ENCODE measurements at regions of chr12 and their contacts with region 1.

Region 1: DNA sequence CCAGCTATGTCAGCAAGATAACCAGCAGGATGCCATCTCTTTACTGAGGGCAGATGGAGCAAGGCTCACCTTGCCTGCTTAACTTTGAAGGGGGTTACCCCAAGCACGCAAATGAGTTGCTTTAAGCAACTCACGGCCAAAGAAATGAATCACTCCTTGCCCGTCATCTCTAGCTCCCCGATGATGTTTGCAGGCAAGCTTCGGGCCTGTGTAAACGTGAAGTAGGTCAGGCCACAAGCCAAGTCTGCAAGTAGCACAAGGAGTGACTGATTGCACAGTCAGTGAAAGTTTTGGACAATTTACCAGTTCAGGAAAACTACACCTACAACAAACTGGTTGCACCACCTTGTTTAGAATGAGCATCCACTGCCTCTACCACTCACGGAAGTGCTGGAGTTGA is 699.7 kb upstream of the TBX3 start:
- DNase-seq: peak; percentile 100
- H3K4me3 ChIP-seq: no peak overlapping the region
- H3K27ac ChIP-seq: peak overlapping the region; percentile 77
- H3K4me1 ChIP-seq: peaks cover 14% of the 10 kb centered on the region
- H3K27me3 ChIP-seq: no peaks in the 10 kb centered on the region
- CTCF ChIP-seq: no peak

Region 2: DNA sequence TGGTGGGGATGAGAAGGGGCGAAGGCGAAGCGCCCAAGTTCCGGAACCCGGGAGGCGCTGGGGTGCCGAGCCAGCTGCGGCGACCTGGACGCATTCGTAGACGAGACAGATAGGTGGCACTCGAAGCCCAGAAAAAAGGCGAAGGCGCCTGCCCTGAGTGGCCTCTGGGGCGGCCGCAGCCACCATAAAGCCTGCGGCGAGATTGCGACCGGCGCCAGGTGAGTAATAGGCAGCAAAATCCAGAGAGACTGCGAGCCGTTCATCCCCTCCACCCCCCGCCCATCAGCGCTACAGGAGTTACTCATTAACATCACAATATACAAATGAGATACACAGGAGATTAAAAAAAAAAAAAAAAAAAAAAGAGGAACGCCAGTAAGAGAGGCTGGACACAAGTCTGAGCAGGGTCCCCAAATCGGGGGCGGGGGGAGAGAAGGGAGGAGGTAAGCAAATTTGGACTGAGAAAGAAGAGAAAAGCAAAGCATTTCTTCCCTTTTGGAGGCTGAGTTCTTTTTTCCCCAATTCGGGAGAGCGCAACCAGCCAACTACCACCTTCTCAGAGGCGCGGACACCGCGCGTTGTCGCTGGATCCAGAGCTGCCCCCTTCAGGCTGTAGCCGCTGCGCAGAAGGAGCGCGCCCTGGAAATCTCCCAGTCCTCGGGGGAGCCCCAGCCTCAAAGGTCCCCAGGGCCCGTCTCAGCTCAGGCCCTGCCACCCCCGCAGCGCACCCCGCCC is 715.4 kb before region 1 on chr12:
- CTCF ChIA-PET with region 1: no interaction called
- dilution Hi-C with region 1: no loop called
- in situ Hi-C with region 1: no loop called
- intact Hi-C with region 1: loop called (anchors 1 kb)
- DNase-seq: peak; percentile 91
- H3K4me3 ChIP-seq: peak overlapping the region; percentile 43 to 60 (median 48)
- H3K27ac ChIP-seq: peak overlapping the region; percentile 75
- H3K4me1 ChIP-seq: peaks cover 41% of the 10 kb centered on the region
- H3K27me3 ChIP-seq: no peaks in the 10 kb centered on the region
- CTCF ChIP-seq: peak; percentile 35 to 69

Region 3: DNA sequence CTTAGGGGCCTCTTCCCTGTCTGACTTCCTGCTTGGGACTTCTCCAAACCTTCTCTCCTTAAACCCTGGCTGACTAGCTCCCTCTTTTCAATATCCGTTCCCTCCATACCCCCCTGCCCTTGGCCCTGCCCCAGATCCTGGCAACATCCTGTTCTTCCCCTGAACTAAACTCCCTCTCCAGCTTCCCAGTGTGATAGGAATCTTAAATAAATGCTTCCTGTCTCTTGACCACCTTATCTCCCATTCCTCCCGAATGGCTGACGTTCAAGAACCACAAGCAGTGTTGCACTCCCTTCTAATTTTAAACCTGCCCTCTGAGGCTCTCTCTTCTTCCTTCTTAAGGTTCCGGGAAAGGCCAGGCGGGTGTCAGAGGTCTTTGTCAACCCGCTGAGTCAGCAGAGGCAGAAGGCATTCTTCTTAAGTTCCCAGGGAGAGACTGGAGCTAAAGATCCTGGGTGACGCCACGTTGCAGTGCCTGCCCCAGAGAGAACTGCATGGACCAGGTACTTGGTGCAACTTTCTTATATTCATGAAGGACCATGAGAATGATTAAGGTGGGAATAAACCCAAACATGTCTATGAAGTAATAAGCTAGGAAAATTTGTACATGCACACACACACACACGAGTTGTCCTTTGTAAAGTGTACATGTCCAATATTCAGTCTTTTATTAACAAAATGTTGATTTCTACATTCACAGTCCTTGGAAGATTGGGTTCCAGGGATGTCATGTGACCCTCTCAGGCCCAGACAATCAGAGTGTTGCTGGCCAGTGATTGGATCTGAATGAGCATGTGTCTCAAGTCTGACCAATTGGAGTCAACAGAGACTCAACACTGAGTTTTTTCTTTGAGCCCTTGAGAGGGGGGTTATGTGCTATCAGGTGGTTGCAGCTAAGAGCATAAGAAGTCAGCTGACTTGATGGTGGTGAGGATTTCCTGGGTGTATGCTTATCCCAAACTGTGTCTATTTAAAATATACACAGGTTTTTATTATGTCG is 279.5 kb before region 1 on chr12:
- CTCF ChIA-PET with region 1: no interaction called
- dilution Hi-C with region 1: no loop called
- in situ Hi-C with region 1: no loop called
- intact Hi-C with region 1: no loop called
- DNase-seq: no peak
- H3K4me3 ChIP-seq: no peak overlapping the region
- H3K27ac ChIP-seq: no peak overlapping the region
- H3K4me1 ChIP-seq: no peaks in the 10 kb centered on the region
- H3K27me3 ChIP-seq: no peaks in the 10 kb centered on the region
- CTCF ChIP-seq: no peak

Region 4: DNA sequence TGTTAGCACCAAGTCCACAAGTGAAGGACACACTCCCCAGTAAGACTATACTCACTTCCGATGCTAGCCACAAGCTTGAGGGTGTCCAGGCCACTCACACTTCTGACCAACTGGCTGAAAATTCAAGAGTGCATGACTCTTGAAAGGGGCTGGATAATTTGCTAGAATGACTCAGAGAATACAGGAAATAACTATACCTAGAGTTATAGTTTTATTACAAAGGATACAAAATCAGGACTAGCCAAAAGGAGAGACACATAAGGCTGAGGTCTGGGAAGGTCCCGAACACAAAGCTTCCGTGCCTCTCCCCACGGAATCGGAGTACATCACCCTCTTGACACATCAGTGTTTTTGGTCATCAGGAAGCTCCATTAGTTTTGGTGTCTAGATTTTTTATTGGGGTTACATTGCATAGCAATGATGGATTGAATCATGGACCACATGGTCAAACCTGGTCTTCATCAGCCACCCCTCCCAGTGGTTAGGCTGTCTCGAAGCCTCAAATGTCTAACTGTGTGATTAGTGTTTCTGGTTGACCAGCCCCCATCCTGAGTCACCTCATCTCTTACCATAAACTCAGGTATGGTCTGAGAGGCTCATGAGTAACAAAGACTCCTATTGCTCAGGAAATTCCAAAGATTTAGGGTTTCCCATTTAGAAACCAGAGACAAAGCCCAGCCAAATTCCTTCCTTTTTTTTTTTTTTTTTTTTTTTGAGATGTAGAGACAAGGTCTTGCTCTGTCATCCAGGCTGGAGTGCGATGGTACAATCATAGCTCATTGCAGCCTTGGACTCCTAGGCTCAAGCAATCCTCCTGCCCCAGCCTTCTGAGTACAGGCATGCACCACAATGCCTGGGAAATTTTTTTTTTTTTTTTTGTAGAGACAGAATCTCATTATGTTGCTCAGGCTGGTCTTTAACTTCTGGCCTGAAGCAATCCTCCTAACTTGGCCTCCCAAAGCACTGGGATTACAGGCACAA is 227.7 kb before region 1 on chr12:
- CTCF ChIA-PET with region 1: no interaction called
- dilution Hi-C with region 1: no loop called
- in situ Hi-C with region 1: no loop called
- intact Hi-C with region 1: loop called (anchors 2 kb)
- DNase-seq: peak; percentile 100
- H3K4me3 ChIP-seq: no peak overlapping the region
- H3K27ac ChIP-seq: peak overlapping the region; percentile 83
- H3K4me1 ChIP-seq: peaks cover 31% of the 10 kb centered on the region
- H3K27me3 ChIP-seq: no peaks in the 10 kb centered on the region
- CTCF ChIP-seq: no peak

Region 5: DNA sequence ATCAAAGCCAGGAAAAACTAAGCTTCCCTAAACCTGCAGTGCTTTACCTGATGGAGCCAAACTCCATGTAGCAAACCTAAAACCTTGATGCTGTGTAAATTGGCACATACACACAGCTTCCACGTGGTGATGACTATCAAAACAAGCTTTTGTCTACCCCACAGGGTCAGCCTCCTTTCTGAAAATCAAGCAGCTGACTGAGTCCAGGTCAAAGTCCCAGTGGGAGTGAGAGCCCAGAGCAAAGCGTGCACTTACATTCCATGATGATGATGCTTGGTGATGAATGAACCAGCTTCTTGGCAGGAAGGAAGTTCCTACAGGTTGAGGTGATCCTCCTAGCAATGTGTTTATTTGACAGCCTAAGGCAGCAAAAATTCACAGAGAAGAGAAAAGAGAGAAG is 69.7 kb before region 1 on chr12:
- CTCF ChIA-PET with region 1: no interaction called
- dilution Hi-C with region 1: loop called (anchors 5 kb)
- in situ Hi-C with region 1: no loop called
- intact Hi-C with region 1: no loop called
- DNase-seq: peak; percentile 83
- H3K4me3 ChIP-seq: no peak overlapping the region
- H3K27ac ChIP-seq: no peak overlapping the region
- H3K4me1 ChIP-seq: peaks cover 16% of the 10 kb centered on the region
- H3K27me3 ChIP-seq: no peaks in the 10 kb centered on the region
- CTCF ChIP-seq: no peak

Region 6: GRCh38 chr12:115632308-115632707 is 248.6 kb after region 1 on chr12:
- CTCF ChIA-PET with region 1: no interaction called
- dilution Hi-C with region 1: no loop called
- in situ Hi-C with region 1: no loop called
- intact Hi-C with region 1: loop called (anchors 5 kb)
- DNase-seq: peak; percentile 8
- H3K4me3 ChIP-seq: no peak overlapping the region
- H3K27ac ChIP-seq: no peak overlapping the region
- H3K4me1 ChIP-seq: no peaks in the 10 kb centered on the region
- H3K27me3 ChIP-seq: peaks cover 3% of the 10 kb centered on the region
- CTCF ChIP-seq: peak; percentile 23 to 61

Measured in mammary epithelial cell (primary cell).